ENCODE measurements at regions of chr1 and their contacts with region 1.

Region 1: DNA sequence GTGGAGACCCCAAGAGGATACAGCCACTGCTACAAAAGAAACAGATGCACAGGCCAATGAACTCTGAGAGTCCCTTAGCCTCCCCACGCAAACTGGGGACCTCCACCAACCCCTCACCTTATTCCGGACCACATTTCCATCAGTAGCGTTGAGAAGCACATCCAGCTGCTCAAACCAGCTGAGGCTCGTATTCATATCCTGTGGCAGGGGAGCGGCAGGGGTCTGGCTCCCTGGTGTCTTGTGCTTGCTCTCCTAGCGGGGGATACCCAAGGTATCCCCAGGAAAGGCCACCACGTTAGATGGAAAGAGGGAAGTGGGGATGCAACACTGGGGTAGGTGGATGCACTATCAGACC is 481 bp downstream of the CCDC163 start:
- DNase-seq: no peak
- H3K4me3 ChIP-seq: peak overlapping the region; percentile 39 to 92 (median 79)
- H3K27ac ChIP-seq: peak overlapping the region in 55 of 59 donors; percentile 6 to 97 (median 89)
- H3K27me3 ChIP-seq: no peaks in the 10 kb centered on the region
- CTCF ChIP-seq: no peak

Region 2: GRCh38 chr1:45339789-45340570 is 159.4 kb before region 1 on chr1 and contains the starts of genes MUTYH and TOE1:
- intact Hi-C with region 1: loop called (anchors 5 kb)
- DNase-seq: peak; percentile 80 to 92 (median 89)
- H3K4me3 ChIP-seq: peak within 1 kb of the TSS; percentile 65 to 98 (median 89)
- H3K27ac ChIP-seq: peak within 1 kb of the TSS; percentile 84 to 100 (median 97)
- H3K27me3 ChIP-seq: no peaks in the 10 kb centered on the region
- CTCF ChIP-seq: peak in 42 of 56 donors; percentile 5 to 65 (median 26)
- total RNA-seq, gene MUTYH: 18.4 to 56.7 (median 33.5) TPM
- total RNA-seq, gene TOE1: 3.3 to 10.9 (median 7.1) TPM